ENCODE measurements at regions of chr21 and their contacts with region 1.

Region 1: GRCh38 chr21:37711836-37712568 is 204.3 kb downstream of the KCNJ6 start:
- DNase-seq: peak; percentile 64
- H3K4me3 ChIP-seq: no peak overlapping the region; a peak in 1 of 4 replicates
- H3K27ac ChIP-seq: peak overlapping the region in 1 of 2 experiments; percentile 22; a peak in 1 of 4 replicates
- H3K4me1 ChIP-seq: peaks cover 0 to 15% of the 10 kb centered on the region in 2 experiments; a peak in 1 of 4 replicates
- H3K27me3 ChIP-seq: no peaks in the 10 kb centered on the region
- CTCF ChIP-seq: peak; percentile 79
- EP300 ChIP-seq: peak in 1 of 2 experiments; percentile 2; a peak in 1 of 4 replicates
- RAD21 ChIP-seq: peak; percentile 77

Region 2: GRCh38 chr21:36994501-36995158 is 717.4 kb before region 1 on chr21:
- CTCF ChIA-PET with region 1: no interaction called
- POLR2A ChIA-PET with region 1: no interaction called
- DNase-seq: no peak
- H3K4me3 ChIP-seq: no peak overlapping the region
- H3K27ac ChIP-seq: no peak overlapping the region
- H3K4me1 ChIP-seq: peaks cover 4 to 6% of the 10 kb centered on the region in 2 experiments; a peak in 2 of 4 replicates
- H3K27me3 ChIP-seq: no peaks in the 10 kb centered on the region
- CTCF ChIP-seq: no peak
- EP300 ChIP-seq: no peak
- RAD21 ChIP-seq: no peak

Region 3: GRCh38 chr21:37700641-37701202 is 11.3 kb before region 1 on chr21:
- CTCF ChIA-PET with region 1: interaction called, 52 read pairs
- POLR2A ChIA-PET with region 1: no interaction called
- DNase-seq: peak; percentile 76
- H3K4me3 ChIP-seq: no peak overlapping the region; a peak in 1 of 4 replicates
- H3K27ac ChIP-seq: no peak overlapping the region
- H3K4me1 ChIP-seq: no peaks in the 10 kb centered on the region; a peak in 1 of 4 replicates
- H3K27me3 ChIP-seq: peaks cover 12% of the 10 kb centered on the region; the same call in 1 of the 2 replicates
- CTCF ChIP-seq: peak; percentile 71
- EP300 ChIP-seq: no peak
- RAD21 ChIP-seq: peak; percentile 67

Region 4: GRCh38 chr21:37916310-37917051 is 204.5 kb after region 1 on chr21 and contains the start of gene KCNJ6:
- CTCF ChIA-PET with region 1: interaction called, 16 read pairs
- POLR2A ChIA-PET with region 1: no interaction called
- DNase-seq: peak; percentile 87
- H3K4me3 ChIP-seq: peak within 1 kb of the TSS; percentile 17 to 51; a peak in 3 of 4 replicates
- H3K27ac ChIP-seq: no peak within 1 kb of the TSS
- H3K4me1 ChIP-seq: peaks cover 0 to 7% of the 10 kb centered on the region in 2 experiments; a peak in 1 of 4 replicates
- H3K27me3 ChIP-seq: peaks cover 26% of the 10 kb centered on the region
- CTCF ChIP-seq: peak; percentile 46
- EP300 ChIP-seq: no peak
- RAD21 ChIP-seq: peak; percentile 65
- polyA plus RNA-seq, gene KCNJ6: not detected in 2 replicates

Region 5: DNA sequence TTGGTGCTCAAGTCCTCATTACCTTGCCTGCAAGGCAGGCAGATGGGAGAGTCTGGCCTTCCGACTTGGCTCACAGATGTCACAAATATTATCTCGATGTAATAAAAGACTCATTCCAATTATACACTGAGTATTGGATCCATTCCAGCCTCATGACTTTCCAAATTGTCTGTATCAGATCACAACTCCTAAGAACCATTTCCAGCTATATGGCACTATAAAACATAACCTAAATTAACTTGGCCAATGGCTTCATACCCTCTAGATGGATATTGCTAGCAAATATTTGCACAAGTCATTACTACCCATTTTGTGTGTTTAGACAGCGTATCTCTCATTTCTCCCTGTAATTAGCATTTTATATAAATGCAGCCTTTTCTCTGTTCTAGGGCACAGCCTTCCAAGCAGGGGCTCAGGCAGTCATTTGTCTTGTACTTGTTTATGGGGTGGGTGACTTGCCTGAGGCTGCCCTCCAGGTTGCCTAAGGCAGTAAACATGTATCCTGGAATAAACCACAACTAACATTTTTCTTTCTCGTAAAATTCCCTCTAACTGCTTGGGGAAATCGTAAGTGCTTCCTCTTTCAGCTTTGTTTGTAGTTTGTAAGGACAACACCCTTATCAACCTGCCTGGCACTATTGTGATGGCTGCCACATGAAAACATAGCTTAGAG is 274.9 kb after region 1 on chr21:
- CTCF ChIA-PET with region 1: no interaction called
- POLR2A ChIA-PET with region 1: no interaction called
- DNase-seq: no peak
- H3K4me3 ChIP-seq: no peak overlapping the region
- H3K27ac ChIP-seq: no peak overlapping the region
- H3K4me1 ChIP-seq: no peaks in the 10 kb centered on the region
- H3K27me3 ChIP-seq: no peaks in the 10 kb centered on the region; the same call in 1 of the 2 replicates
- CTCF ChIP-seq: no peak
- EP300 ChIP-seq: no peak
- RAD21 ChIP-seq: no peak

Region 6: DNA sequence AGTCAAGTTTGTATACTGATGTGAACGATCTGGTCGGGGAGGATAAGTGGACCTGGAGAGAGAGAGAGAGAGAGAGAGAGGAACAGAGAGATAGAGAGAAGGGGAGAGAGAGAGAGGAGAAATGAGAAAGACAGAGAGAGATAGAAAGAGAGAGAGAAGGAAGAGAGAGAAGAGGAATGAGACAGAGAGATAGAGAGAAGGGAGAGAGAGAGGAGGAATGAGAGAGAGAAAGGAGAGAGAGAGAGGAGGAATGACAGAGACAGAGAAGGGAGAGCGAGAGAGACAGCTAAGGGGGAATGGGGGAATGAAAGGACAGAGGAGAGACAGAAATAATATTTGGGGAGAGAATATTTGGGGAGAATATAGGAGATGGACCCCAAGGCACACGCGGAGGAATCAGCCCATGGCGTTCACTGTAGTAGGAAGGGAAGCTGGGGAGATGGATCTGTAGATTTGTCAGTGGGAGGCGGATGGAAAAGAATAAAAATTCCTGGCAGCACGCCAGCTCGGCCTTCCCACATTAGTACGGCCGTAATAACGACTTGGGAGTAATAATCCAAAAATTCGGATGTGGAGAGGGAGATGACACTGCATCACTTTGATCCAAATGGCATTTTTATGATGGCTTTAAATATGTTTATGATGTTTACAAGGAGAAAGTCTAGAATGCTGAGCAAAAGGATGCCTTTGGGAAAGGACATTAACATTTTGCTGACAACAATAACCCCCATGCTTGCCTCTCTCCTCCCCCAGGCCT is 364.0 kb after region 1 on chr21:
- CTCF ChIA-PET with region 1: no interaction called
- POLR2A ChIA-PET with region 1: no interaction called
- DNase-seq: no peak
- H3K4me3 ChIP-seq: no peak overlapping the region
- H3K27ac ChIP-seq: no peak overlapping the region
- H3K4me1 ChIP-seq: no peaks in the 10 kb centered on the region
- H3K27me3 ChIP-seq: no peaks in the 10 kb centered on the region
- CTCF ChIP-seq: no peak
- EP300 ChIP-seq: no peak
- RAD21 ChIP-seq: no peak

Region 7: GRCh38 chr21:38126669-38127303 is 414.8 kb after region 1 on chr21:
- CTCF ChIA-PET with region 1: interaction called, 15 read pairs
- POLR2A ChIA-PET with region 1: no interaction called
- DNase-seq: peak; percentile 57
- H3K4me3 ChIP-seq: 0 out of 4 replicates have a peak overlapping the region, but pooled peaks of 1 of the 2 experiments have one; percentile 39
- H3K27ac ChIP-seq: no peak overlapping the region
- H3K4me1 ChIP-seq: no peaks in the 10 kb centered on the region
- H3K27me3 ChIP-seq: peaks cover 16% of the 10 kb centered on the region; the same call in 1 of the 2 replicates
- CTCF ChIP-seq: peak; percentile 78
- EP300 ChIP-seq: no peak
- RAD21 ChIP-seq: peak; percentile 74

Region 8: DNA sequence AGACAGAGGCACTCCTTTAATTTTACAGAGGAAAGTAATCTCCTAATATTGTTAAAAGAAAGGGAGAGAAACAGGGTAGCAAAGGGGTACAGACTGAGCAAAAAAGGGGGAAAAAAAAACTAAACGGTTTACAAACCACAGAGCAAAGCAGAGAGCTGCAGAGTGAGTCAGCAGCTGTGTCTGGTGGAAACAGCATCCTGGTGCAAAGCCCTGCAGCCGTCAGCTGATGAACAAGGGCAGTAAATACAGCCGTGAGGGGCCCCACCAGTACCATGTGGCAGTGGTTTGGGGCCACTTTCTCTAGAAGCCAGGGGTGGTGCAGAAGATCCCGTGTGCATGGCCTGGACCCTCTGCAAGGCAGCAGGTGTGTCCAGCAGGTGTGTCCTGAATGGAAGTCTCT is 675.0 kb after region 1 on chr21:
- CTCF ChIA-PET with region 1: no interaction called
- POLR2A ChIA-PET with region 1: no interaction called
- DNase-seq: no peak
- H3K4me3 ChIP-seq: no peak overlapping the region
- H3K27ac ChIP-seq: no peak overlapping the region
- H3K4me1 ChIP-seq: no peaks in the 10 kb centered on the region; a peak in 1 of 4 replicates
- H3K27me3 ChIP-seq: no peaks in the 10 kb centered on the region
- CTCF ChIP-seq: no peak
- EP300 ChIP-seq: no peak
- RAD21 ChIP-seq: no peak